OCI-LY7 (cell line): ENCODE measurements at regions of chr20 and their contacts with region 1.

Region 1: DNA sequence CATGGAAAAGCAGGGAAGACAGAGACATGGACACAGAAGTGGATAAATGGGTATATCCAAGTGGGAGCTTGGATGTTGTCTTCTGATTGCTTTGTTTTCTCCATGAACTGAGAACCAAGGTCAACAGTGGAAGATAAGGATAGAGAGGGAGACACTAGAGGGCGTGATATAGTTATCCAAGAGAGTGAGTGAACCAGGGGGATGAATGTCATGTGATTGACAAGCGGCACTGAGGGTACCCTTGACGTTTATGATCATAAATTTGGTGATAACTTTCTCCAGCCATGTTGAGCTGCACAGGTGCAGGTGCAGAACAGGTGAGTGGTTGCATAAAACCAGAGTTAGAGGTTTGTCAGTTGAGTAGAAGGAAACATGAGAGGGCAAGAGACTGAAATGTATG is 20.7 kb downstream of the EBF4 start:
- DNase-seq: peak; percentile 30
- H3K4me3 ChIP-seq: no peak overlapping the region
- H3K27ac ChIP-seq: no peak overlapping the region
- H3K4me1 ChIP-seq: no peaks in the 10 kb centered on the region
- CTCF ChIP-seq: peak; percentile 72

Region 2: DNA sequence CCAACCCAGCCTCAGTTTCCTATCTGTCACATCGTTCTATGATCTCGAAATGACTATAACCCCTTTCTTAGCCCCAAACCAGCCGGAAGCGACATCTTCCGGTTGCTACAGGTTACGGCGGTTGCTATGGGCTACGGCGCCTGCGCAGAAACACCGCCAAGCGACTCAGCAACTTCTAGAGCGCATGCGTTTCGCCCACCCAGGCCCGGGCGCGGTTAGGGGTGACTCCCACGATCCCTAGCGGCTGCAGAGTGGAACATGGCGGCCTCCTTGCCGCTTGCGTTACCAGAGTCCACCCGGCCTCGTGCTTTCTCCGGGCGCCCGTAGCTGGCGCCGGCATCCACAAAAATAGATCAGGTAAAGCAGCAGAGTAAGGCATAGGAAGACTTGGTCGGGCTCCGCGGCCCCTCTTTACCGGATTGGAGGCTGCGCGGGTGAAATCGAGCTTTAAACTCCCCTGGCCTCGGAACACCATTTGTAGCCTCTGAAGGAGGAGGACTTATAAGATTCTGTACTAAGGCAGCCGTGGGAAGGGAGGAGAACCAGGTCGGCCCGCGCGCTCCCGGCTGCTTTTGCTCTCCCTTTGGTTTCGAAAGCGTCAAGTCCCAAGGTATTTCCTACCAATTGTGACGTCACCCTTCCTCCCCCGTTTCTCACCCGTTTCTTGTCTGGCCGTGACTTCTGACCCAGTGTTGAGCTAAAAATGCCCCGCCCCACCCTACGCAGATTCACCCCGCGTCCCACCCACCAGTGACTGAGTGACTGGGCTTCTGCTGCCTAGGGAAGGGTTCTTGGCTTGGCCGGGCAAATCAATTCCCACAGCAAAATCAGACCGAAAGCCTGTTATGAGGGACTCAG is 1387.9 kb before region 1 on chr20:
- CTCF ChIA-PET with region 1: no interaction called
- POLR2A ChIA-PET with region 1: no interaction called
- intact Hi-C with region 1: no loop called
- DNase-seq: peak; percentile 98
- H3K4me3 ChIP-seq: peak overlapping the region; percentile 82
- H3K27ac ChIP-seq: peak overlapping the region; percentile 60
- H3K4me1 ChIP-seq: peaks cover 46% of the 10 kb centered on the region
- CTCF ChIP-seq: no peak

Region 3: DNA sequence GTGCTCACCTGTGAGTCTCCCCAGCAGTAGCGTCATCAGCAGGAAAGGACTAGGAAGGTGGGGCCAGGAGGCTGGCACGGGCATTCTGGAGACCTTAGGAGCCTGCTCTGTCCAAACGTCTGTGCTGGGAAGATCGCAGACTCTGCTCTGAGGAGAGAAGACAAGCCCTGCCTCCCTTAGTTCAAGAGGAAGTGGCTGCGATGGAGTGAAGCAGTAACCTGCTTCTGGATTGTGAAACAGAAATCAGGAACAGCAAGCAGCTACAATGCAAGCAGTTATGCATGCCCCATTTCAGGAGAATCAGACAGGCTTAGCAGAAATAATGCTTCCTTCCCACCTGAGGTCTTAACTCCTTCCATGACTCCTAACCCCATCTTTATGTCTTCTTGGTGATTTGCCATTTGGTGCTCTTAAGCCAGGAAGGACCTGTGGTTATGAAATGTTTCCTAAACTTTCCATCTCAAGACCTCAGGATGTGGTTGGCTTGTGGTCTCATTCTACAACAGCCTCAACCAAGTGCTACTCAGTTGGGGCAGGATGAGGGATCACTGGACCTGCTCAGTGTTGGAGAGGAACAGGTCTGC is 1093.3 kb before region 1 on chr20 and contains the start of gene SIRPB1:
- CTCF ChIA-PET with region 1: no interaction called
- POLR2A ChIA-PET with region 1: no interaction called
- intact Hi-C with region 1: no loop called
- DNase-seq: no peak
- H3K4me3 ChIP-seq: no peak within 1 kb of the TSS
- H3K27ac ChIP-seq: no peak within 1 kb of the TSS
- H3K4me1 ChIP-seq: no peaks in the 10 kb centered on the region
- CTCF ChIP-seq: no peak
- total RNA-seq, gene SIRPB1: not detected in 2 replicates

Region 4: DNA sequence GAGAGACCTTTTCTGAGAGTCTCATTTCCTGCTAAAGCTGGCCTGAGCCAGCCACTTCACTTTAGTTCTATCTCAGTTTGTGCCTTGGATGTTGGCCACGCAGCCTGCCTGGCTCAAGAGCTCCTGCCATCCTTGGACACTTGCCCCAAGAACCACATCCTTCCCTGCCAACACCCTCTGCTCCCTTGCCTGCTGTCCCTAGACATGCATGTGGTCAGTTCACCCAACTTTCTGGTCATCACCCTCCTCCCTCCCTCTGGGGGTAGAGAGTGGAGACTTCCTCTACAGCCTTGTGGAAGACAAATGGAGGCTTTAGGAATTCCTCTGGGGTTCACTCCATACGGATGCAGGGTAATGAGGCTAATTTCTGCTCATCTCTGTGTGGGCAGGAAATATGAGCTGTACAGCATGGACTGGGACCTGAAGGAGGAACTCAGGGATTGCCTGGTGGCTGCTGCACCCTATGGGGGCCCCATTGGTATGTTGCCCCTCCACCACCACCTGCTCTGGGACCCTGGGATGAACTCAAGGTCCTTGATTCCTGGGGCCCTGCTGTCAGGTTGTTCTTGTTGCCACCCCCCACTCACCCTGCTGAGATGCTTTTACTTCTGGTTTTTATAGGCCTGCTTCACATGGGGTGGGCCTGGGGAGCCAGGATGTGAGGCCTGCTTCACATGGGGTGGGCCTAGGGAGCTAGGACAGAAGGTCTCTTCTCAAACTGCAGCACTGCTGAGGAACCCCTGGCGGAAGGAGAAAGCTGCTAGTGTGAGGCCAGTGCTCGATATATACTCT is 146.2 kb after region 1 on chr20:
- CTCF ChIA-PET with region 1: no interaction called
- POLR2A ChIA-PET with region 1: no interaction called
- intact Hi-C with region 1: loop called (anchors 10 kb)
- DNase-seq: no peak
- H3K4me3 ChIP-seq: no peak overlapping the region
- H3K27ac ChIP-seq: no peak overlapping the region
- H3K4me1 ChIP-seq: no peaks in the 10 kb centered on the region
- CTCF ChIP-seq: no peak

Region 5: DNA sequence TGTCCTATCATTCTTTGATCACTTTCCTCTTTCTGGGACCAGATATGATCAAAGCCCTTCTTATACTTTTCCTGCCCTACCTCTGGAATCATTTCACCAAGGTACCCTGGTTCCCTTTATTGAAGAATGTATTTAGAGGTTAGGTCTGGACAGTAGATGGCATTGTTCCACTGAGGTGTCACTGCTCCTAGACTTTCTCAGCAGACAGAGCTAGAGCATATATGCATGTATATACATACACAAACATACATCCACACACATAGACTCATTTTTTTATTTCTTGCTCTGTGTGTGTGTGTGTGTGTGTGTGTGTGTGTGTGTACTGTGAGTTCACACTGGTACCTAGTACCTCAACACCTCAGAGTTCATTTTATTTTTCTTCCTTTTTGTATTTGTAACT is 200.9 kb after region 1 on chr20:
- CTCF ChIA-PET with region 1: no interaction called
- POLR2A ChIA-PET with region 1: no interaction called
- intact Hi-C with region 1: no loop called
- DNase-seq: peak; percentile 12
- H3K4me3 ChIP-seq: no peak overlapping the region
- H3K27ac ChIP-seq: no peak overlapping the region
- H3K4me1 ChIP-seq: no peaks in the 10 kb centered on the region
- CTCF ChIP-seq: peak; percentile 59; the same call in 1 of the 2 replicates